ENCODE measurements at regions of chr4 and their contacts with region 1.

Region 1: DNA sequence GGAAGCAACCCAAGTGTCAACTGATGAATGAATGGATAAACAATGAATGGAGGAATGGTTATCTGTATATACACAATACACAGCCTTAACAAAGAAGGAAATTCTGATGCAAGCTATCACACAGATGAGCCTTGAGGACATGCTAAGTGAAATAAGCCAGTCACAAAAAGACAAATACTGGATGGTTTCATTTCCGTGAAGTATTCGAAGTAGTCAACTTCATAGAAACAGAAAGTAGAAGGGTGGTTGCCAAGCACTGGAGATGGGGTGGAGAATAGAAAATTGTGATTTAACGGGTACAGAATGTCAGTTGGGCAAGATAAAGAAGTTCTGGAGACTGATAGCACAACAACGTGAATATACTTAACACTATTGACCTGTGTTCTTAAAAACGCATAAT is 28.2 kb downstream of the CENPU start:
- DNase-seq: no peak
- H3K4me3 ChIP-seq: no peak overlapping the region
- H3K27ac ChIP-seq: no peak overlapping the region
- H3K4me1 ChIP-seq: no peaks in the 10 kb centered on the region
- H3K27me3 ChIP-seq: no peaks in the 10 kb centered on the region
- CTCF ChIP-seq: no peak
- POLR2A ChIP-seq: no peak

Region 2: DNA sequence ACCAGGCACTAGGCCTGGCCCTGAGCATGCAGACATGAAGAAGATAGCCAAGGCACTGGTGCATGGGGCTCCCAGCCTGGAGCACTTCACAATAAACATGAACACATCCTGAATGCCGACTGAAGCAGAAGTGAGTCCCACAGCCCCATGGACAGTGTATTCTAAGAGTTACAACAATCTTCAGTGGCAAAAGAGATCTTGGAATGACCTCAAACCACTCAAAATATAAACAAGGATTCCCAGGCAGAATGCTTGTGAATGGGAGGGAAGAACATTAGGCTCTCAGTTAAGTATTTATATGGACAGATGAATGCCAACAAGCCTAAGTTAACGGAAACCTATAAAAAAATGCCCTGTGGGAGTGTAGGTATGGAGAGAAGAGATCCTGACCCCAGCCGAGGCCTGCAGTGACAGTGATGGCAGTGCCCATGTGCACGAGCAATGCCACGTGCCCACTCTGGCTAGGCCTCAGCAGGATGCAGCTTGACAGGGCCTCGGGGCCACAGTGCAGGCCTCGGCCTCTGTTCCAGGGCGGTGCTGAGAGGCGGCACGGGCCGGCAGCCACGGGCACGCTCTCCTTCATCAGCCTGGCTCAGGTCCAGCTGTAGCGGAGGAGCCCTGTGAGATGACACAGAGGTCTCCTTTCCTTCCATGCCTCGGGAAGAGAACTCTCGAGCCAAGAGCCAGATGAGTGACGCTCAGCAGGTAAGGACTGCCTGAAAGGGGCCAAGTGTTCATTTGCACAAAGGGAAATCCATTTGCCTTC is 280.5 kb before region 1 on chr4:
- intact Hi-C with region 1: no loop called
- DNase-seq: peak in 1 of 2 donors; percentile 82
- H3K4me3 ChIP-seq: no peak overlapping the region
- H3K27ac ChIP-seq: peak overlapping the region; percentile 70
- H3K4me1 ChIP-seq: peaks cover 49% of the 10 kb centered on the region
- H3K27me3 ChIP-seq: no peaks in the 10 kb centered on the region
- CTCF ChIP-seq: no peak
- POLR2A ChIP-seq: no peak

Region 3: DNA sequence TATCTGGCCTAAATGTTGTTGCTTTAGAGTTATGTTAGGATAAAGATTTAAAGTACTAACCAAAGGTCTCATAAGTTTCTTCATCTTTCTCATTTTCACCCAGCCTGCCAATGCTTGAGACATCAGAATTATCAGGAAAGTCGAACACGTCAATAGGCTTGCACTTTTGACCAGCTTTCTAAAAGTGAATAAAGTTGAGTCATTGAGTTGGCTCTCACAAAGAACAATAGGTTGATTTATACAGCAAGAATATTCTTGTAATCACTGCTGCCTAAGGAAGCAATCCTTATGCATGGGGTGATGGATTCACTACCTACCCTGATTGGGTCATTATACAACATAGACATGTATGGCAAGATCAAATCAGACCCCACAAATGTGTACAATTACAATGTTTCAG is 23.2 kb after region 1 on chr4:
- intact Hi-C with region 1: loop called (anchors 1 kb)
- DNase-seq: no peak
- H3K4me3 ChIP-seq: no peak overlapping the region
- H3K27ac ChIP-seq: no peak overlapping the region
- H3K4me1 ChIP-seq: peaks cover 15% of the 10 kb centered on the region
- H3K27me3 ChIP-seq: no peaks in the 10 kb centered on the region
- CTCF ChIP-seq: no peak
- POLR2A ChIP-seq: no peak

Measured in vagina (tissue), 2 donors.